Activated CD4-positive, alpha-beta memory T cell treated with anti-CD3 and anti-CD28 coated beads for 36 hours (primary cell): ENCODE measurements at regions of chr21 and their contacts with region 1.

Region 1: DNA sequence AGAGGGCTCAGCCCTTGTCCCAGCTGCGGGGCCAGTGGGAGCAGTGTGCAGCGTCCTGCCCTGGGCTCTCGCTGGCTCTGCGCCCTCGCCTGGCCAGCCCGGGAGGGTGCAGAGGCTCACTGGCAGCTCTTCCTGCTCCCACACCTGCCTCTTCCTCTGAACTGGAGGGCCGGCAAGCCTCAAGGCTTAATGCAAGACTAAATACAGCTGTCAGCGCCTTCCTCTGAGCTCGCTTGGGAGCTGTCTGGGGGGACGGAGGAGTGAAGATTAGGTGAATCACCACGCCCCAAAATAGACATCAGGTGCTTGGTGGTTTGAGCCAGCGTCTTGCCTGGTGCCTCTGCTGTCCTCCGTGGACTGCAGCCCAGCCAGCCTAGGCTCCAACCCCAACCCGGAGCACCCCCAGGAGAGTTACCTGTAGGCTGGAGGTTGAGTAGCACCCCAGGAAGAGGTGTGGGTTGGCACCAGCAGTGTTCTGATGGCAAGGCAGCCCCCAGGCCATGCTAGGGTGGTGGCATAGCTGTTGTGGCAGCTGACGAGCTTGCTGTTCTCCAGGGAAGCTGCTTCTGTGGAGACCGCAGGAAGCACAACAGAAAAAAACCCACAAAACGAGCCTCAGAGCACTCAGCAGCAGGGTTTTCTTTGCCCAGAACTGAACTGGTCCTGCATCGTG is 36.9 kb downstream of the UMODL1 start:
- DNase-seq: peak; percentile 76
- H3K4me3 Mint-ChIP-seq: no peak overlapping the region
- H3K27ac Mint-ChIP-seq: no peak overlapping the region
- H3K4me1 Mint-ChIP-seq: peaks cover 10% of the 10 kb centered on the region
- H3K27me3 Mint-ChIP-seq: peaks cover 1% of the 10 kb centered on the region

Region 2: DNA sequence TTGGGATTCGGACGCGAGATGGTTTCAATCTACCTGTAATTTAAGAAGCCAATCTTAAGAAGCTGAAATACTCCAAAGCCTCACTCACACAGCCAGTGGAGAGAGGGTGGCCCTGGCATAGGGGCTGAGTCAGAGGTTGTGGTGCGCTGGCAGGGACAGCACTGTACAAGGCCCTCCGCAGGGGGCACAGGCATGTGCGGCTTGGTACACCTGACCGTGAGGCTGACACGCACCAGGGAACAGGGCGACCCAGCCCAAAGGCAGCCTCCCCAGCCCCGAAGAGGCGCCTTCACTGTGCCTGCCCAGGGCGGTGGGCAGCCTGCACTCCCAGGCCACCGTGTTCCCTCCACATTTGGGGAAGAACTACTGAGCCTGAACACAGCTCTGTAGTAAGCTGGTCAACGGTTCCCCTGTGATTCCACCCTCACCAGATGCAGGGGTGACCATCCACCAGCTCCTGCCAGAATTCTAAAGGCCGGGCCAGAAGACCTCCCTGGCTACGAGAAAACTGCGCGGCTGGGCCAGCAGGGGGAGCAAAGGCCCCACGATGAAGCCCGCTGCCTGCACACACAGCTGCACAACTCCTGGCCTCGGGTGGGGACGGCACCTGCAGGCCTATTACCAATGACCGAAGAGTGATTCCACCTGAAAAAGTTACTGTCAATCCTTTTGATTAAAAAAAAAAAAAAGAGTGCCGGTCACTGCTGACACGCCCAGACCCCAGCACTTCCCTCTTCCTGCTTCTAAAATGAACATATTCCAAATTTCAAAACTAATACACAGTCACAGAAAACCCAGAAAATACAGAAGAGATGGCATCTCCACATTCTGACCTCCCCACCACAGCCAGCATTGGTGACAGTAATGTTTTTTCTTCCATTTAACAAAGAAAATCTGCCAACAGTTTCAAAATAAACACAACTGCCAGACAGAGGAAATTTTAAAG is 291.5 kb before region 1 on chr21:
- CTCF ChIA-PET with region 1: interaction called, 47 read pairs
- POLR2A ChIA-PET with region 1: interaction called, 4 read pairs
- intact Hi-C with region 1: loop called (anchors 2 kb)
- DNase-seq: peak; percentile 71
- H3K4me3 Mint-ChIP-seq: no peak overlapping the region
- H3K27ac Mint-ChIP-seq: no peak overlapping the region
- H3K4me1 Mint-ChIP-seq: peaks cover 2% of the 10 kb centered on the region
- H3K27me3 Mint-ChIP-seq: no peaks in the 10 kb centered on the region

Region 3: DNA sequence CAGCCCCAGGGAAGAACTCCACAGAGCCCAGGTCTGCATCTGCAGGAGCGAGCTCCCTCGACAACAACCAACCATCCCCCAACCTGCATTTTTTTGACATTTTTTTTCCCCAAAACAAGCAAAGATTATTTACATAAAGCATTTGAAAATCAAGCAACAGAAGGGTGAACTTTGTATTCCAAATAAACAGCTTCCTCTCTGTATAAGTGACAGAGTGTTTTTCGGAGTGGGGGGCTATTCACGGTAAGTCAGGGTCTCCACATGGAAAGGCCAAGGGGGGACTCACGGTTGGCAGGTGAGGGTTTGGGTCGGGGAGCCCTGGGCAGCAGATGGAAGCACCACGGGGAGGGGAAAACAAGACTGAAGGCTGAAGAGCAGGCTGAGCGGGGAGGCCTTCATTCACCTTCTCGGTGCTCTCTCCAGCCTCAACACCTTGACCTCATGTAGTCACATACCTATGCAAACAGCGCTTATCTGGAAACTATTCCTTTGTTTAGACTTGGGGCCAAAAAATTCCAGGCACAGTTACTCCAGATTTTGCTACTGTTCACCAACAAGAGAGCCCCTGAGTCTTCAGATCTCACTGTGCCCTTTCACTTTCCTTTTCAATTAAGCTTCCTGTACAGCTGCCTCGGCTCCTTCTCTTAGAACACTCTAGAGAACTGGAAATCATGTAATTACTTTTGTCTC is 181.8 kb before region 1 on chr21:
- CTCF ChIA-PET with region 1: interaction called, 11 read pairs
- POLR2A ChIA-PET with region 1: no interaction called
- intact Hi-C with region 1: no loop called
- DNase-seq: peak; percentile 36
- H3K4me3 Mint-ChIP-seq: peak overlapping the region; percentile 89
- H3K27ac Mint-ChIP-seq: peak overlapping the region; percentile 96
- H3K4me1 Mint-ChIP-seq: peaks cover 52% of the 10 kb centered on the region
- H3K27me3 Mint-ChIP-seq: no peaks in the 10 kb centered on the region

Region 4: DNA sequence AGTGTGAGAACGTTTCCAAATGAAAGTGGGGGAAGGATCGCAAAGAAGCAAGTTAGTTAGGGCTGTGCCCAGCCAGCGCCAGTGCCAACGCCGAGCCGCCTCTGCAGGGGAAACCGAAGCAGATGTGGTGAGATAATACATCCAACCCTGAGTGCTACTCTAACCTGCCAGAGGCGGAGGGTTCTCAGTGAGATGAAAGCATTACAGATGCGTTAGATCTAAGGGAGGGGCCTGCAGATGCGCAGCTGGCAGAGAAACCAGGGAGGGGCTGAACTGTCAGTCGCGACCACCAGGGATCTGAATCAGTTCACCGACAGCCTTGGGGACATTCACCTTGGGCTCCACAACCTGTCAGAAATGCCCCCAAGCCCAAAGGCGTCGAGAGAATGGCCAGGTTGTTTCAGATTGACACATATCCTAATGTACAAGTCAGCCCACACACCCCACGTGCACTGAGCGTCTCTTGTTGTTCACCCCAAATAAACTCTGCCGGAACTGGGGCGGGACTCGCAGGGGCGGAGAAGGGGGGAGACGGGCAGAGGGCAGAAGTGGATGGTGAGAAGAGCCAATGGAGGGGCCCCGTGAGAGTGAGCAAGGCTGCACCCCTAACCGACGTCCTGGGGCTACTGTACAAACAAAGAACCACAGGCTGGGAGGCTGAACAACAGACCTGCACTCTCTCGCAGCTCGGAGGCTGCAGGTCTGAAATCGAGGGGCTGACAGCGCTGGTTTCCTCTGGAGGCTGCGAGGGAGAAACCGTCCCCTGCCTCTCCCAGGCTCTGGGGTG is 45.6 kb before region 1 on chr21:
- CTCF ChIA-PET with region 1: interaction called, 4 read pairs
- POLR2A ChIA-PET with region 1: no interaction called
- intact Hi-C with region 1: loop called (anchors 2 kb)
- DNase-seq: peak; percentile 89
- H3K4me3 Mint-ChIP-seq: peak overlapping the region; percentile 60
- H3K27ac Mint-ChIP-seq: peak overlapping the region; percentile 34
- H3K4me1 Mint-ChIP-seq: peaks cover 43% of the 10 kb centered on the region
- H3K27me3 Mint-ChIP-seq: no peaks in the 10 kb centered on the region

Region 5: DNA sequence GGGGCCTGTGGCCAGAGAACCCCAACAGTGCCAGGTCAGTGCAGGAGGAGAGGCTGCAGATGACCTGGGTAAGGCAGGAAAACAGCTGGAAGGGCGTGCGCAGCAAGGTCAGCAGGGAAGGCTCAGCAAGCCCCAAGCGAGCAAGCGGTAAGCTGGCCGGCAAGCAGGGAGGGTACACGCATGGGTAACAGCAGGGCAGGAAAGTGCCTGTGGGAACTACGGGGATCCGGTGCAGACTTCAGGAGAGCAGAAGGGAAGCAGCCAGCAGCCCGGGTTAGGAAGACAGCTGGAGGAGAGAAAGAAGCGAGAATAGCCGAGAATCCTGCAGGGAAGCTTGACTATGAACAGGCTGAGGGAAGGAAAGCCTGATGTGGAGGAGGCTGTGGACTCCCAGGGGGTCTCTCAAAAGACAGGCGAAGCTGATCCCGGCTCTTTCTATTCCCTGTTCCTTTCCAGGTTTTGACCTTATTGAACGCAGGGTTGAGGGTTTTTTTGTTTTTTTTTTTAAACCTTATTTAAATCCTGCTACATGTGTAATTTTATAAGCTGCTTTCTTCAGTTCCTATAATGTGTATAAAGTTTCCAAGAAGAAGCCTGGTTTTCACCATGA is 16.0 kb before region 1 on chr21:
- CTCF ChIA-PET with region 1: interaction called, 15 read pairs
- POLR2A ChIA-PET with region 1: no interaction called
- intact Hi-C with region 1: no loop called
- DNase-seq: no peak
- H3K4me3 Mint-ChIP-seq: no peak overlapping the region
- H3K27ac Mint-ChIP-seq: no peak overlapping the region
- H3K4me1 Mint-ChIP-seq: peaks cover 5% of the 10 kb centered on the region
- H3K27me3 Mint-ChIP-seq: peaks cover 4% of the 10 kb centered on the region

Region 6: GRCh38 chr21:42209819-42210479 is 101.9 kb after region 1 on chr21:
- CTCF ChIA-PET with region 1: no interaction called
- POLR2A ChIA-PET with region 1: no interaction called
- intact Hi-C with region 1: no loop called
- DNase-seq: no peak
- H3K4me3 Mint-ChIP-seq: no peak overlapping the region
- H3K27ac Mint-ChIP-seq: no peak overlapping the region
- H3K4me1 Mint-ChIP-seq: no peaks in the 10 kb centered on the region
- H3K27me3 Mint-ChIP-seq: no peaks in the 10 kb centered on the region